Activated CD8-positive, alpha-beta T cell treated with anti-CD3 and anti-CD28 coated beads, Interleukin-2, amount 10 ng/mL, durations not matched to agents 7 days and 5 days (primary cell): ENCODE measurements at regions of chr15 and their contacts with region 1.

Region 1: DNA sequence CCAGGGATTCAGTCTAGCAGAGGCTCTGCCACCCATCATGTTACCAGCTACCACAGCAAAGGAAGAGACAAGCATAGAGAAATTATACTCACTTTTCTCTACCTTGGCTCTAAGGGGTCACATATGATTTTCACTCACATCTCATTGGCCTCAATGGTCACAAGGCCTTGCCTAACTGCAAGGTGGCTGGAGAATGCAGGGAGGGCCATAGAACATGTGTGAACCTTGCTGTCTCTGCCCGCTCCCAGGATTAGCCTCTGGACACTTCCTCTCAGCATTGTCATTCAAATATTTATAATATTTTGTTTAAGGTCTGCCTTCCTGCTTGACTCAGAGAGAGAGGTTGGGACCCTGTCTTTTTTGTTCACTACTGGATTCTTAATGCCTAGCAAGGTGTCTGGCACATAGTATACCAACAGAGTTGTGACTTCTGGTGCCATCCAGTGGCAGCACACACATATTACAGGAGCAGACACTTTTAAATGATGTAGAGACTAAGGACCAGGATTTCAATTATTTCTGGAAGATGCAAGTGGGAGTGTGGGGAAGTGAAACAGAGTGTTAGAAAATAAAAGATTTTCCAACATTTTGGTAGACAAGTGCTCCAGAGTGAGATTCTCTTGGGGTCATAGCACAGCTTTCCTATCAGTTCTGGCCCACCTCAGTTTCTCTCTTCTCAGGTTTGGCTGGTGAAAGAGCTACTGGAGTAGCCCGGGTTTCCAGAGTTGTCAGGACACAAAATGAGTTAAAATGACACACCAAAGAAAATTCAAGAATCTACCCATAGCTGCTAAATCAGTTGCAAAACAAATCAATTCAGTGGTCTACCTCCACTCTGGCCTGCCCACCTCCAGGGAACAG is 119.0 kb upstream of the RASGRP1 start:
- DNase-seq: peak; percentile 85
- ATAC-seq: peak; percentile 56
- H3K4me3 Mint-ChIP-seq: peak overlapping the region; percentile 64
- H3K27ac Mint-ChIP-seq: peak overlapping the region; percentile 92
- H3K4me1 Mint-ChIP-seq: peaks cover 71% of the 10 kb centered on the region
- H3K27me3 Mint-ChIP-seq: no peaks in the 10 kb centered on the region

Region 2: DNA sequence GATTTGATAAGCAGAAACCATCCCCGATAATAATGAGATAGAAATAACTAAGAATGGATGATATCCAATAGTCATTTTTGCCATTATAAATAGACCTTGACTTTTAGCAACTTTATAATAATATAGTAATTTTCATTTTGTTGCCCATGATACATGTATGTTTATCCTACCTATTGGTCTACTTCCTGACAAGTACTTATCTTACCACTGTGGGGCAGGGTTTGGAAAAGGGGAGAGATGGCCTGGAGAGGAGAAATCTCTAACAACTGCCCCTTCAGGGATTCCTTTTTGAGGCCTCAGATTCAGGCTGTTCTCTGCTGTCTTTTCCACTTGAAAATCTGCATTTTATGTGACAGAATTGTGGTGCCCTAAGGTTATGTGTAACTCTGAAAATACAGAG is 187.5 kb before region 1 on chr15:
- CTCF ChIA-PET with region 1: interaction called, 81 read pairs
- POLR2A ChIA-PET with region 1: interaction called, 4 read pairs
- DNase-seq: no peak
- ATAC-seq: no peak
- H3K4me3 Mint-ChIP-seq: no peak overlapping the region
- H3K27ac Mint-ChIP-seq: peak overlapping the region; percentile 18
- H3K4me1 Mint-ChIP-seq: peaks cover 5% of the 10 kb centered on the region
- H3K27me3 Mint-ChIP-seq: no peaks in the 10 kb centered on the region

Region 3: GRCh38 chr15:38521316-38521715 is 162.3 kb before region 1 on chr15:
- CTCF ChIA-PET with region 1: interaction called, 20 read pairs
- POLR2A ChIA-PET with region 1: interaction called, 3 read pairs
- DNase-seq: no peak
- ATAC-seq: no peak
- H3K4me3 Mint-ChIP-seq: no peak overlapping the region
- H3K27ac Mint-ChIP-seq: peak overlapping the region; percentile 51
- H3K4me1 Mint-ChIP-seq: peaks cover 23% of the 10 kb centered on the region
- H3K27me3 Mint-ChIP-seq: no peaks in the 10 kb centered on the region

Region 4: DNA sequence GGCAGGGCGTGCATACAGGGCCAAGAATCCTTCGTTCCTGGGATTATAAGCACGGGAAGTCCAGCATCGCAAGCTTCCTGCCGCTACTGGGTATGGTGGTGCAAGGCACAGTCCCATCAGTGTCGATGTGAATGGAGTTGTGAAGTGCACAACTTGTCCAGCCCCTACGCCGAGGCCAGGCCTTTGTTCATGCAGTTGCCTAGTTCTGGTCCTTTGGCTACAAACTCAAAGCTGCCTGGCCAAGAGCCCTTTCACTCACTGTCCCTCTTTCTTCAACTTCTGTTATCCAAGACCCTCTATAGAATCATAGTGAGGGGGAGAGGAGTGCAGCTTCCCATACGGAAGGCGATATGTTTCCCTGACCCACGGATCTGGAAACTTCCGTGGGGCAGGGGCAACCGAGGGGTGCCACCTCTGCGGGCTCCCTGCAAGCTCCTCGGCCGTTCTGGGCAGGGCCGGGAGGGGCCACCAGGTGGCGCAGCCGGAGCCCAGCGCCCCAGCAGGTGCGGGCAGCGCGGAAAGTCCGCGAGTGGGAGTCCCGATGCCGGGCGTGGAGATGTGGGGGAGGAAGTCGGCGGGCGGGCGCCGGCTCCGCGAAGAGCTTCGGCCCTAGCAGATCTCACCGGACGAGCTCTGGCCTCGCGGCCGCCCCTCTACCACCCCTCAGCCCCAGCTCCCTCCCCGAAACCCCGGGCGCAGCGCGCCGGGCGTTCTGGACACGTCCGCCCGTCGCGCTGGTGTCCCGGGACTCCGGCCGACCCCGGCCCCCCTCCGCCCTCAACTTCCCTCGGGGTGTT is 119.7 kb before region 1 on chr15:
- CTCF ChIA-PET with region 1: interaction called, 572 read pairs
- POLR2A ChIA-PET with region 1: interaction called, 336 read pairs
- DNase-seq: peak; percentile 89
- ATAC-seq: peak; percentile 81
- H3K4me3 Mint-ChIP-seq: peak overlapping the region; percentile 94
- H3K27ac Mint-ChIP-seq: peak overlapping the region; percentile 93
- H3K4me1 Mint-ChIP-seq: peaks cover 58% of the 10 kb centered on the region
- H3K27me3 Mint-ChIP-seq: no peaks in the 10 kb centered on the region

Region 5: DNA sequence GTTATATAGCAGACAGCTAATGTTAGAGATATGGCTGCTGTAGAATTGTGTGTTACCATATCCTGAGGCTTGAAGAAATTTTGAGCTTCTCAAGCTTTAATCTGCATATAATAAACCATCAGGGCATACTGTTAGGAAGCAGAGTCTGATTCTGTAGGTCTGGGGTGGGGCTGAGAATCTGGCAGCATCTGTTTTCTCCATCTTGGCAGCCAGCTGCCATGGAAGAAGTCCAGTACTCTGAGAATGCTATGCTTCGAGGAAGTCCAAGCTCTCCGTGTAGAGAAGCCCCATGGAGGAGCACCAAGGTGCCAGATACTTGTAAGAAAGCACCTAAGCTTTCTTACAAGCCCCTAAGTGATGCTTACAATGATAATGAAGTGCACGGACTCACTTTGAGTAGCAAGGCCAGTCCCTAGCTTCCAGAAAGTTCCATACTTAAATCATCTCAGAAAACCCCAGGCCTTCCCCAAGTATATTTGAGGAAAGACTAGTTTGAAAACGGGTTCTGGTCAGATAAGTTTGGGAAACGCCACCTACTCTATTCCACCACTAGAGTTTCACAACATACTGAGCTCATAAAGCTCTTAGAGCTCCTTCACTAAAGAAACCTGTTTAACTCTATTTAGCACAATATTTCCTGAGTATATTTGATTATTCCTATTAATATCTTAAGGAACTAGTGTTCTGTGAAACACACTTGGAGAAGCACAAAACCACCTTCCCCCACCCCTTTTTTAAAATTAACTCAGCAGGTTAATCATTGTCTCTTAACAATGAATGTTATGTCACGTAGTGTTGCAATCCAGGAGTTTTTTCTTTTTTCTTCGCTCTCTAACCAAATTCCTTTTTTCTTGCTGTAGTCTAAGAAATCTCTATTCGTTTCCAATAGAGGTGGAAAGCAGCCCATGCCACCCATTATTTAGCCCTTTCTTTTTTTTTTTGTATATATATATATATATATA is 59.1 kb before region 1 on chr15:
- CTCF ChIA-PET with region 1: interaction called, 12 read pairs
- POLR2A ChIA-PET with region 1: no interaction called
- DNase-seq: no peak
- ATAC-seq: no peak
- H3K4me3 Mint-ChIP-seq: no peak overlapping the region
- H3K27ac Mint-ChIP-seq: no peak overlapping the region
- H3K4me1 Mint-ChIP-seq: peaks cover 32% of the 10 kb centered on the region
- H3K27me3 Mint-ChIP-seq: no peaks in the 10 kb centered on the region

Region 6: GRCh38 chr15:38671675-38672254 is 11.8 kb before region 1 on chr15:
- CTCF ChIA-PET with region 1: interaction called, 803 read pairs
- POLR2A ChIA-PET with region 1: interaction called, 81 read pairs
- DNase-seq: peak; percentile 44
- ATAC-seq: peak; percentile 34
- H3K4me3 Mint-ChIP-seq: peak overlapping the region; percentile 44
- H3K27ac Mint-ChIP-seq: peak overlapping the region; percentile 91
- H3K4me1 Mint-ChIP-seq: peaks cover 84% of the 10 kb centered on the region
- H3K27me3 Mint-ChIP-seq: no peaks in the 10 kb centered on the region

Region 7: DNA sequence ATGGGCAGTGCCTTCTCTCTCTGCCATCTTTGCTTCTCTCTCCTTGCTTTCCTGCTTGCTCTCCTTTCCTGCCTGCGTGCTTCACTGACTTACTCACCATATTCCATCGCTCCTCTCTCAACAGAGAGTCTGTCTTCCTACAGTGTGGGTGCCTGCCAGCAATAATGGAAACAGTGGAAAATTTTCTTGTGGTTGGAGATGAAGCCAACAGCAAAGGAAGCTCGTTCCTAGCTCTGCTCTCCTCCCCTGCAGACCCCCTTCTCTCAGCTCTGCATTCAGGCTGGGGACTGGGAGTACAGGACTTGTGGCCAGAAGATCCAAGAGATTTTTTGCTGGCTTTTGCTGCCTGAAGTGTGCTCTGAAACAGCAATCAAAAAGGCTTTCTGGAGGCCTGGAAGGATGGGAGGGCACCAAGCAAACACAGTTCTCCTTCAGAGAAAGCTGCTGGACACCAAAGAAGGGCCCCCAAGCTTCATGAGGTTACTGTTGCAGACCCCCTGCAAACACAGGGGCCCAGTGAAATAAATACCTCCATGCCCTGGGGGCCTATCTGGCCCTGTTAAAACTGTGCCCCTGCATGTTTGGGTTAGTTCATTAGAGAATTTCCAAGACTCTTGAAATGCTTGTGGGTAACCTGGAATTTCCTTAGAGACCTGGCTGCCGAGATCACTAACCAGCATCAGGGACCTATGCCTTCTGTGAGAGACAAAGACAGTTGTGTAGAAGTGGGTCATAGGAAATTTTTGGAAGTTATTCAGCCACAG is 30.9 kb after region 1 on chr15:
- CTCF ChIA-PET with region 1: no interaction called
- POLR2A ChIA-PET with region 1: no interaction called
- DNase-seq: no peak
- ATAC-seq: no peak
- H3K4me3 Mint-ChIP-seq: no peak overlapping the region
- H3K27ac Mint-ChIP-seq: no peak overlapping the region
- H3K4me1 Mint-ChIP-seq: no peaks in the 10 kb centered on the region
- H3K27me3 Mint-ChIP-seq: peaks cover 9% of the 10 kb centered on the region